OCI-LY7 (cell line): ENCODE measurements at regions of chr1 and their contacts with region 1.

Region 1: GRCh38 chr1:235992868-235993267 is 72.0 kb downstream of the NID1 start:
- DNase-seq: no peak
- H3K4me3 ChIP-seq: no peak overlapping the region
- H3K27ac ChIP-seq: no peak overlapping the region
- H3K4me1 ChIP-seq: no peaks in the 10 kb centered on the region
- CTCF ChIP-seq: no peak

Region 2: DNA sequence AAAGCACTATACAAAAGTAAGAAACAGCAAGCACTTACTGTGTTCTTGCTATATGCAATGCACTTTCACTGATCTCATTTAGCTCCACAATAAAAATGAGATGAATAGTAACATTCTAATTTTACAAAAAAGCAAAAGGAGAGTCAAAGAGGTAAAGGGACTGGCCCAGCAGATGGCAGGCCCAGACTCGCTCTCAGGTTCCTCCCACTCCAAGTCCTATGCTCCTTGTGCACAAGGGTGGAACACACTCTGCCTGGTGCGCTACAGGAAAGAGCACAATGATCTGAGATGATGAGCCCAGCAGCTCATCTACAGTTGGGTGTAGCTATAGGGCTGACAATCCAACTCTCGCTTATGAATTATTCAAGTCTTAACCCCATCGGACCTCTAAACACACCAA is 32.1 kb before region 1 on chr1:
- CTCF ChIA-PET with region 1: no interaction called
- POLR2A ChIA-PET with region 1: no interaction called
- intact Hi-C with region 1: loop called (anchors 1 kb)
- DNase-seq: no peak
- H3K4me3 ChIP-seq: no peak overlapping the region
- H3K27ac ChIP-seq: no peak overlapping the region
- H3K4me1 ChIP-seq: no peaks in the 10 kb centered on the region
- CTCF ChIP-seq: no peak